Heart right ventricle (tissue), 16 donors: ENCODE measurements at regions of chr9 and their contacts with region 1.

Region 1: GRCh38 chr9:131788341-131788740 is 48.5 kb upstream of the RAPGEF1 start:
- DNase-seq: no peak
- ATAC-seq: no peak
- H3K4me3 ChIP-seq: no peak overlapping the region
- H3K27ac ChIP-seq: no peak overlapping the region
- H3K4me1 ChIP-seq: no peaks in the 10 kb centered on the region
- H3K27me3 ChIP-seq: peaks cover 3 to 65% (median 53%) of the 10 kb centered on the region in 7 donors
- CTCF ChIP-seq: no peak

Region 2: GRCh38 chr9:130805510-130806326 is 982.6 kb before region 1 on chr9:
- intact Hi-C with region 1: loop called in 1 of 10 experiments (anchors 5 kb)
- DNase-seq: no peak
- ATAC-seq: no peak
- H3K4me3 ChIP-seq: no peak overlapping the region
- H3K27ac ChIP-seq: no peak overlapping the region
- H3K4me1 ChIP-seq: peaks cover 0 to 7% (median 0%) of the 10 kb centered on the region in 9 donors
- H3K27me3 ChIP-seq: no peaks in the 10 kb centered on the region
- CTCF ChIP-seq: no peak

Region 3: DNA sequence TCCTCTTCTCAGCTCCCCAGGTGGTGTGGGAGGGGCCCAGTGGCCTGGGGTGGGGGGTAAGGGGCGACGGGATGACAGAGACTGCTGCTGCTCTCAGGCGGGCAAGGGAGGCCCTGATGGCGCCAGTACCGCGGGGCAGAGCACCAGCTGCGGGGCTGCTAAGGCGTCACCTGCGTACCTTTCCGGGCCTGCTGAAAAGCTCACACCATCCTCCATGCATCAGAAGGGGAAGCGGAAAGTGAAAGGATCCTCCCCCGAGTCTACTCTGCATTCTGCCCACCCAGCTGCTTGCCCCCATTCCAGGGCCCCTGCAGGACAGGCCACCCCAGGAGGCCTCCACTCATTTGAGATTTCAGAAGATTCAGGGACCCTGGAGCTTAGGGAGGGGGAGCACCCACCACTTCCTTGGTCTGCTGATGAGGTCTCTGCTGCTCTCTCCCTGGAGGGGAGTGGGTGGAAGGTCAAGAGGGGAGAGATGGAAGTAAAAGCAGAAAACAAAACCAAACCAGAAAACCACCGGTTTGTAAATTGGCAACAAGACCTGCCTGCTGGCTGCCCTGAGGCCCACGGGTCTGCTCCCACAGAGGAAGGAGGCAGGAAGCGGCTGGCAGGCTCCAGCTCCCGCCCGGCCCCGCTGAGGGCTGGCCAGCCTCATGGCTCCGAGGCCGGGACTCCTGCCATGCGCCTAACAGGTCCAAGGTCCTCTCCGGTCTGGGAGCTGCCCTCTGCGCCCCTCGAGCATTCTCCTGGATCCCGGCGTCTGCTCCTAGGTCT is 209.4 kb before region 1 on chr9:
- intact Hi-C with region 1: no loop called
- DNase-seq: no peak
- ATAC-seq: peak in 1 of 8 donors; percentile 27
- H3K4me3 ChIP-seq: no peak overlapping the region
- H3K27ac ChIP-seq: peak overlapping the region in 3 of 10 donors; percentile 5 to 71 (median 9)
- H3K4me1 ChIP-seq: peaks cover 0 to 29% (median 13%) of the 10 kb centered on the region in 9 donors
- H3K27me3 ChIP-seq: no peaks in the 10 kb centered on the region
- CTCF ChIP-seq: no peak

Region 4: DNA sequence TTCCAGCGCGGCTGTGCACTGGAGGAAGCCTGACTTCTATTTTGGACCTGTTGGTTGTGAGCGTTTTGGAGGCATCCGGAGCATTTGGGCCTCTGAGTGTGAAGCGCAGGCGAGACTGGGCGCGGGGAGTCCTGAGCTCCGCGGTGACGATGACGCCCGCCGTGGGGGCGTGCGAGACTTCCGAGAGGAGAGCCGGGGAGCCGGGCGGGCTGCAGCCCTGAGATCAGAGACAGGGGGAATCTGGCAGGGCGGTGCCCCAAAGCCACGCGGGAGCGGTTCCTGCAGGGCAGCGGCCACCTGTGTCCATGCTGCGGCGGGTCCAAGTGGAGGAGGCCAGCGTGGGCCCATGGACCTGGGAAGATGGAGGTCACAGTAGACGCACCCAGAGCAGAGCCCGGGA is 420.9 kb after region 1 on chr9:
- intact Hi-C with region 1: loop called in 1 of 10 experiments (anchors 1 kb)
- DNase-seq: no peak
- ATAC-seq: no peak
- H3K4me3 ChIP-seq: no peak overlapping the region
- H3K27ac ChIP-seq: no peak overlapping the region
- H3K4me1 ChIP-seq: peaks cover 0 to 11% (median 7%) of the 10 kb centered on the region in 9 donors
- H3K27me3 ChIP-seq: no peaks in the 10 kb centered on the region
- CTCF ChIP-seq: no peak